Panc1 (cell line): ENCODE measurements at regions of chr2 and their contacts with region 1.

Region 1: DNA sequence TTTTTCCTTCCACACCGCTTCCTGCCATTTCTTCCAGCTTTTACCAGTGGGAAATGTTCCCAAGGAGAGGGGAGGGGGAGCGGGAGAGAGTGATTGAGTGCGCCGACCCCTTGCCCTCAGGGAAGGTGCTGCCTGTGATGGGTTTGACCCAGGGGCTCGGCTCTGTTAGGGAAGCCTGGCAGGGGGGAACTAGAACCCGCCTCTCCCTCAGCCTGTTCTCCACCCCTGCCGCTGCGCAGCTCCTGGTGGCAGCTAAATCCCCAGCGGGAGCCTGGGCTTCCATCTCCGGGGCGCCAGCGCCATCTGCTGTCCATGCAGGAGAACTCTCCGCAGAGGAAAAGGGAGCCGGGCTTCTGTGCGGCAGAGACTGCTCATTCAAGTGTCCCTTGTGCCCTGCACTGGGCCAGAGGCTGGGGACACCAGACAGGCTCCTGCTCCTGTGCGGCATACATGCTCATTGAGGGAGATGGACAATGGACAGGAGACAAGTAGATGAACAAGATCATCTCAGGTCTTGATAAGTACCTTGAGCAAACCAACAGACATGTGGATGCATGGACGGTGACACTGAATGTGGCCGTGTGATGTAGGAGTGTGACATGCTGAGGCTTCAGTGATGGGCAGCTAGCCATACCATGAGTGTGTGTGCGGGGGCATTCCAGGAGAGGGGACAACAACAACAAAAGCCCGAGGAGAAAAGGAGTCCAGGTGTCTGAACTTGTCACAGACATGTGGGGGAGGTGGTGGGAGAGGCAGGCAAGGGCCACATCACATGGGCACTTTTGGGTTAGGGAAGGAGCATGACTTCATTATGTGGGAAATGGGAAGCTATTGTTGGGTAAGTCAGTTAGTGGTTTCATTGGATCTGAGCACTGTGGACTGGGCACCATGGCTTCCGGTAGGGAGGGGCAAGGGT is 13.3 kb downstream of the CHPF start:
- DNase-seq: peak; percentile 62
- ATAC-seq: peak; percentile 94
- H3K4me3 ChIP-seq: peak overlapping the region; percentile 7 to 36; a peak in 3 of 4 replicates
- H3K27ac ChIP-seq: no peak overlapping the region
- H3K4me1 ChIP-seq: no peaks in the 10 kb centered on the region
- H3K27me3 ChIP-seq: peaks cover 5% of the 10 kb centered on the region; the same call in 1 of the 2 replicates
- CTCF ChIP-seq: peak; percentile 95

Region 2: DNA sequence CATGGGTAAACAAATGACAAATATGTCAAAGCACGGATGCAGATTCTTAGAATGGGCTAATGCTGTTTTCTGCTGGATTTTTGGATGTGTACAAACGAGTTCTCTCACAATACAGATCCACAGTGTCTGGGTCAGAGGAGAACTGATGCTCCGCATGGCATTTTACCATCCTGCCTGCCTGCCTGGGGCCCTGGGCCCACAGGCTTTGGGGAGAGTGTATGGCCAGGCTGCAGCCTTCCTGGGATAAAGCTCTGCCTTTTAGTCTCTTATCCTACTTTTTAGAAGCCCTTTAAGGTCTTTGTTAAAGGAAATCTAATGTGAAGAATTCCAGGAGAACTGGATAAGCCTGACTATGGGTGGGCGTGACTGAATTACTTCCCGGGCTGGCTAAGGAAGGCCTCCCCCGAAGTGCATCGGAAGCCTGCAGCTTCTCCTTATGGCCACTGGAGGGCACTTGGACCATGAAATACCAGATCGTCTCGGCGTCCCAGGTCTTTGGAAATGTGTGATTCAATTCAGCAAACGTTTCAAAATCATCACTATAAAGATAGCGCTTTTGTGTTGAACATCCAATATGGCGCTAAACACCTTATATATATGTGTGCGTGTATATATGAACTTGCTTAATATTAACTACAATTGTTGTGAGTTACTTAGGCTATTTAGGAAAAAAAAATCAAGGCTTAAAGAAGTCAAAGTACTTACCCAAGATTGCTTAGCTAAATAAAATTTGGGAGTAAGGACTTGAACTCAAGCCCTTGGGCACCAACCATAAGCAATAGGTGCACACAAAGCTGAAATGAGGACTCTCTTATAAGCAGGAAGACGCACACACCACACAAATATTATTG is 127.4 kb before region 1 on chr2:
- CTCF ChIA-PET with region 1: interaction called, 29 read pairs
- POLR2A ChIA-PET with region 1: no interaction called
- in situ Hi-C with region 1: no loop called
- intact Hi-C with region 1: loop called (anchors 1 kb)
- DNase-seq: peak; percentile 42
- ATAC-seq: peak; percentile 80
- H3K4me3 ChIP-seq: no peak overlapping the region
- H3K27ac ChIP-seq: no peak overlapping the region; the same call in 1 of the 2 replicates
- H3K4me1 ChIP-seq: peaks cover 36% of the 10 kb centered on the region
- H3K27me3 ChIP-seq: no peaks in the 10 kb centered on the region
- CTCF ChIP-seq: peak; percentile 95

Region 3: GRCh38 chr2:219447242-219448098 is 82.8 kb before region 1 on chr2:
- CTCF ChIA-PET with region 1: interaction called, 11 read pairs
- POLR2A ChIA-PET with region 1: no interaction called
- in situ Hi-C with region 1: no loop called
- intact Hi-C with region 1: no loop called
- DNase-seq: no peak
- ATAC-seq: no peak
- H3K4me3 ChIP-seq: no peak overlapping the region
- H3K27ac ChIP-seq: no peak overlapping the region
- H3K4me1 ChIP-seq: peaks cover 2% of the 10 kb centered on the region; the same call in 1 of the 2 replicates
- H3K27me3 ChIP-seq: no peaks in the 10 kb centered on the region
- CTCF ChIP-seq: no peak

Region 4: GRCh38 chr2:219459460-219460311 is 70.6 kb before region 1 on chr2:
- CTCF ChIA-PET with region 1: interaction called, 13 read pairs
- POLR2A ChIA-PET with region 1: no interaction called
- in situ Hi-C with region 1: no loop called
- intact Hi-C with region 1: no loop called
- DNase-seq: peak; percentile 59
- ATAC-seq: peak; percentile 85
- H3K4me3 ChIP-seq: no peak overlapping the region
- H3K27ac ChIP-seq: no peak overlapping the region
- H3K4me1 ChIP-seq: peaks cover 3% of the 10 kb centered on the region; the same call in 1 of the 2 replicates
- H3K27me3 ChIP-seq: no peaks in the 10 kb centered on the region
- CTCF ChIP-seq: peak; percentile 95

Region 5: DNA sequence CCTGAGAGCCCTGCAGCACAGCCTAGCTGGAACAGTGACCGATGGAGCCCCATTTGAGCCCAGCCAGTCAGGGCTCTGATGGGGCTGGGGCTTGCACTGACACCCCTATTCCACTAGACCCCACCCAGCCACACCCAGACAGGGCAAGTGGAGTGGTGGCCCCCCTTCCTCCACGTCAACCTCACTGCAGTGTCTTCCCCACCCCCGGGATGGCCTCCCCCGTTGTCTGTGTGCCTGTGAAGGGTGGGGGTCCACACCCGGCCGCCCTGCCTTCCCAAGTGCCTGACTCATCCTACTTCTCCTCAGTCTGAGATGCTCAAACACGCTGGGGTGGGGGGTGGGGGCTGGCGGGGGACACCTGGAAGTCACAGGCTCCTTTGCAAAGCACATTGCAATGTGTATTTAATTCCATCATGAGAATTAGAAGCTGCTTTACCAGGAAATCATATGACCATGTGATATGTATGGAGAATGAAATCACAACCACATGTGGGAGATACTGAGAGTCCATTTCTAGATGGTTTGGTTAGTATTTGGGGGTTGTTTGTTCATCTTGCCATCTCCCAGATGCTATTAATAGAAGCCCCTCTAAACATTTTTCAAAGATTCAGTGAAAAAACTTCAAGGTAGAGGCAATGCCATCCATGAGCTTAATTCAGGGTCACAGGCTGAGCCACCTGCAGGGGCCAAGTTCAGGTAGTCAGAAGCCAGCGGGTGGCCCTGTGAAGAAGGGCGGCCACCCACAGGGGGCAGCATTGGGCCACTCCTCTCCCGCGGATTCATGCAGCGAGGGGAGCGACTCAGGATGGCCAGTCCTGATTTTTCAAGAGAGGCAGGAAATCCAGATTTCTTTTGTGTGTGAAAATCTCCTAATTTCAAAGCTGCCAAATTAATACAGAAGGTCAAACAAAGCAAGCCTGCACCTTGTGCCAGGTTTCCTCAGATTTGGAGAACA is 54.3 kb before region 1 on chr2:
- CTCF ChIA-PET with region 1: interaction called, 9 read pairs
- POLR2A ChIA-PET with region 1: no interaction called
- in situ Hi-C with region 1: no loop called
- intact Hi-C with region 1: loop called (anchors 5 kb)
- DNase-seq: no peak
- ATAC-seq: peak; percentile 88
- H3K4me3 ChIP-seq: peak overlapping the region in 1 of 2 experiments; percentile 32; a peak in 1 of 4 replicates
- H3K27ac ChIP-seq: no peak overlapping the region
- H3K4me1 ChIP-seq: no peaks in the 10 kb centered on the region
- H3K27me3 ChIP-seq: no peaks in the 10 kb centered on the region
- CTCF ChIP-seq: peak; percentile 96

Region 6: GRCh38 chr2:219498280-219499057 is 31.8 kb before region 1 on chr2 and contains the start of gene GMPPA:
- CTCF ChIA-PET with region 1: interaction called, 36 read pairs
- POLR2A ChIA-PET with region 1: no interaction called
- in situ Hi-C with region 1: no loop called
- intact Hi-C with region 1: no loop called
- DNase-seq: peak; percentile 98
- ATAC-seq: peak; percentile 94
- H3K4me3 ChIP-seq: peak within 1 kb of the TSS; percentile 71 to 95
- H3K27ac ChIP-seq: peak within 1 kb of the TSS; percentile 96
- H3K4me1 ChIP-seq: peaks cover 15% of the 10 kb centered on the region
- H3K27me3 ChIP-seq: no peaks in the 10 kb centered on the region
- CTCF ChIP-seq: no peak
- total RNA-seq, gene GMPPA: 66.2 TPM

Region 7: GRCh38 chr2:219509780-219510511 is 20.4 kb before region 1 on chr2:
- CTCF ChIA-PET with region 1: interaction called, 12 read pairs
- POLR2A ChIA-PET with region 1: no interaction called
- in situ Hi-C with region 1: no loop called
- intact Hi-C with region 1: no loop called
- DNase-seq: no peak
- ATAC-seq: peak; percentile 91
- H3K4me3 ChIP-seq: peak overlapping the region; percentile 33 to 49
- H3K27ac ChIP-seq: no peak overlapping the region
- H3K4me1 ChIP-seq: peaks cover 22% of the 10 kb centered on the region
- H3K27me3 ChIP-seq: no peaks in the 10 kb centered on the region; the same call in 1 of the 2 replicates
- CTCF ChIP-seq: peak; percentile 94